RWPE1 (cell line): ENCODE measurements at regions of chr10 and their contacts with region 1.

Region 1: DNA sequence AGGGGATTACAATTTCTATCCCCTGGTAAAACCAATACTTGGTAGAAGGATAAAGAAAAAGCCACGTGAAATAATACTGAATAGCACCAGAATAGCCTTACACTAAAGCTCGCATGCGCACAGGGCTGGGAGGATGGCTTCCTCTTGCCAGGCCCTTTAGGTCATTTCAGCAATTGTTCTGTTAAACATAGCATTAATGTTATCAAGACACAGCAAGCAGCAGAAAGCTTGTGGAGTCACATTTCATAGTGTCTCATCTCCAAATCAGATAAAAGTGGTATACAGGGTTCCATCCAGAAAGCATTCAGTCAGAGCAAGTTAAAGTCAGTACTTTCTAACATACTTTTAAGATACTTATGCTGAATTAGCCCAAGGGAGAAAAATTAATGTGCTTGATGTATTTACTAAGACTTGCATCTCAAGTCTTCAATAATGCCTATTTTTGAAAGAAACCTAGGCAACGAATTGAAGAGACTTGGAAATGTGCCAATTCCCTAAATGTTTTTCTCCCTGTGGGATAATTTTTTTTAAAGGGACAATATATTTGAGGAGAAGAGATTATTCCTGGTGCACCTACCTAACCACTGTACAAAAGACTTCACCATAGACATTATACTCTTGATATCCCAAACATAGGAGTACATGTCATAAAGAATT is 14.3 kb upstream of the NPM3 start:
- DNase-seq: no peak
- H3K27ac ChIP-seq: no peak overlapping the region
- CTCF ChIP-seq: no peak

Region 2: DNA sequence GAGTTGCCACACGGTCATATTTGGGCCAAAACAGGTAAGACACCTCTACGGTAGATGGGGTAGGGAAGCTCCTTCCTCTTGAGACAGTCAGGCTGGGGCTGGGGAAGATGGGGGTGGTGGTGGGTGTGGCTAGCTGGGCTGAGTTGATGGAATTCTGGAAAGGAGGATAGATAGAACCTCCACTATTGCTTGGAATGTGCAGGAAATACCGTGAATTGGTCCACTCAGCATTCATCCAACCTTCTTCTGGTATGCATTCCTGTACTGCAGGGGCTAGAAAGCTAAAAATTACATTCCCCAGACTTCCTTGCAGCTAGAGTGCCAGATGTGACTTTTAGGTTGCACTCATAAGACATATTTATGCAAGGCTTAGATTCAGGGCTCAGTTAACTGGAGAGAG is 641.6 kb before region 1 on chr10:
- CTCF ChIA-PET with region 1: no interaction called
- POLR2A ChIA-PET with region 1: interaction called, 12 read pairs
- DNase-seq: no peak
- H3K27ac ChIP-seq: no peak overlapping the region
- CTCF ChIP-seq: no peak

Region 3: DNA sequence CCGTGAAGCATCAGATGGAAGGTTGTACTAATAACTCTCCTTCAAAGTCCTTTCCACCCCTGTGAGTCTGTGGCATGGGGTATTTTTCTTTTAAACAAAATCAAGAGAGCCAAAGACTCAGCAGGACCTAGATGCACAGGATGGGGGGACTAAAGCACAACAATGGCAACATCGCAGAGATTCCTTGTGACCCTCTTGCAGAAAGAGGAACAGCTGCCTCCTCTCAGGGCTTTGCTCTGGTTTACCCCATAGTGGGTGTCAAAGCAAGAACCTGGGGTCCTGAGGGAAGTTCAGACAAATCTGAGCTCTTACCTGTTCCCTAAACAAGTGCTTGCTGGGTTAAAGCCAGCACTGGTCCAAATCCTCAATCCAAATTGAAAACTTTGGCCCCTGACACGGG is 60.9 kb before region 1 on chr10:
- CTCF ChIA-PET with region 1: no interaction called
- POLR2A ChIA-PET with region 1: no interaction called
- DNase-seq: no peak
- H3K27ac ChIP-seq: no peak overlapping the region
- CTCF ChIP-seq: no peak

Region 4: GRCh38 chr10:101772895-101773761 is 24.4 kb before region 1 on chr10:
- CTCF ChIA-PET with region 1: no interaction called
- POLR2A ChIA-PET with region 1: no interaction called
- DNase-seq: no peak
- H3K27ac ChIP-seq: no peak overlapping the region
- CTCF ChIP-seq: no peak